ENCODE measurements at regions of chr13 and their contacts with region 1.

Region 1: DNA sequence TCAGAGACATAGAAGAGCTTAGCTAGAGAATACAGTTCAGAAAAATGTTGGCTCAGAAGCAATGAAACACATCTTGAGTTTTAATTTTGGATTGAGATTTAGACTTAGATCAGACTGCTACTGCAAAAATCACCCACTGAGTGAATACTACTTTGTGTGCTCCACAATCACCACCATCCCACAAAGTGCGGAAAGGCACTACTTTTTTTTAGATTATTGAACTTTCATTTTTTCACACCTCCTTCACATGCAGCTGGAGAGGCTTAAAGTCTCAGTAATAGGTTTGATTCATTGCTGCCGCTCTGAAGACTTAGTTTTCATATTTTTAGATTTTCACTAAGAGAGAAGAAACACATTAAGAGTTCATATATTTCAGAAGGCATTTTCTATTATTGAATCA is 289.9 kb upstream of the PRR20A start:
- DNase-seq: no peak
- ATAC-seq: no peak
- H3K4me3 ChIP-seq: no peak overlapping the region
- H3K27ac ChIP-seq: no peak overlapping the region
- H3K4me1 ChIP-seq: no peaks in the 10 kb centered on the region
- H3K27me3 ChIP-seq: no peaks in the 10 kb centered on the region
- CTCF ChIP-seq: no peak

Region 2: DNA sequence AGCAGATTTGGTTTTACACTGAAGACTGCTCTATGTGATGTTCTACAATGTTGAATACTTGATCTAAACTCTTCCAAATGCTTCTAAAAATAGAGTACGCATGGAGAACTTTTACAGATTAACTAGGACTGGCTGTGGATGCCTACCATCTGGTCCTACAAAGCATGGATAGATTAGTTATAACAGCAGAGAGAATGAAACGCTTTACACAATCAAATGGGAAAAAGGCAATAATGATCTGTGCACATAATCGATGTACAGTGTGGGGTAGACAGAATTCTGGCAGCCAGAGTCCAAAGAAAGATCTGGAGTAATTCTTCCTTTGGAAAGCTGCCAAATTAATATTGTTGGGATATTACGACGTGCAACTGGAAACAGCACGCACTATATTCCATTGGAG is 1595.6 kb before region 1 on chr13:
- CTCF ChIA-PET with region 1: interaction called, 11 read pairs
- POLR2A ChIA-PET with region 1: no interaction called
- in situ Hi-C with region 1: no loop called
- intact Hi-C with region 1: no loop called
- DNase-seq: no peak
- ATAC-seq: no peak
- H3K4me3 ChIP-seq: no peak overlapping the region
- H3K27ac ChIP-seq: no peak overlapping the region
- H3K4me1 ChIP-seq: no peaks in the 10 kb centered on the region
- H3K27me3 ChIP-seq: no peaks in the 10 kb centered on the region
- CTCF ChIP-seq: no peak

Region 3: GRCh38 chr13:56886398-56886797 is 35.5 kb after region 1 on chr13:
- CTCF ChIA-PET with region 1: no interaction called
- POLR2A ChIA-PET with region 1: no interaction called
- in situ Hi-C with region 1: no loop called
- intact Hi-C with region 1: no loop called
- DNase-seq: no peak
- ATAC-seq: no peak
- H3K4me3 ChIP-seq: no peak overlapping the region
- H3K27ac ChIP-seq: no peak overlapping the region
- H3K4me1 ChIP-seq: no peaks in the 10 kb centered on the region
- H3K27me3 ChIP-seq: no peaks in the 10 kb centered on the region
- CTCF ChIP-seq: no peak